Thyroid gland (tissue), 4 donors: ENCODE measurements at regions of chrX and their contacts with region 1.

Region 1: DNA sequence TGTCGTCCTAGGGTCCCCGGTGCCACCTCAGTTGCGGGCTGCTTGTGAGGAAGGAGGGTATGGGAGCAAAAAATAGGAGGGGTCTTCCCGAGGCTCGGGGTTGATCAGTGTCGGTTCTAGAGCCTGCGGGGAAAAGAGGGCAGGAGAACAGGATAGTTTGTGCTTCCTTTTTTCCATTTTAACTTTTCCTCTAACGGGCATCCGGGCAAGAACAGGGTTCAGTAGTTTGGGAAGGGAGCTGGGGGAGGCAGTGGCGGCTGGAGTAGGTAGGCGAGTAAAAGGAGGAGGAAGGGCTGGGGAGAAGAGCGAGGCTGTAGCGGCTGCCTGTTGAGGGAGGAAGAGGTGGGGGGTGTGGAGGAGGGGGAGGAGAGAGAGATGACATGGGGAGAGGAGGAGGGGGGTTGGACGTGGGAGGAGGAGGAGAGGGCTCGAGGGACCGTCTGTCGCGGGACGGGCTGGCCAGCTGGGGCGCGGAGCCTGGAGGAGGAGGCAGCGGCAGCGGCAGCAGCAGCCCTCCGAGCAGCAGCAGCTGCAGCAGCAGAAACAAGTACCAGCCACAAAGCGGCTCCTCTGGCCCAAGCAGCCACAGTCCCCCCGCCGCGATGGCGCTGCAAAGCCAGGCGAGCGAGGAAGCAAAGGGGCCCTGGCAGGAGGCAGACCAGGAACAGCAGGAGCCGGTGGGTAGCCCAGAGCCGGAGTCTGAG is at the start of gene SLC16A2:
- DNase-seq: peak; percentile 80 to 86
- H3K4me3 ChIP-seq: peak within 1 kb of the TSS; percentile 10 to 37 (median 15)
- H3K27ac ChIP-seq: peak within 1 kb of the TSS; percentile 76 to 93 (median 82)
- H3K4me1 ChIP-seq: peaks cover 0 to 10% of the 10 kb centered on the region in 2 donors
- H3K27me3 ChIP-seq: no peaks in the 10 kb centered on the region
- CTCF ChIP-seq: no peak
- POLR2A ChIP-seq: peak in 1 of 2 donors; percentile 54
- total RNA-seq, gene SLC16A2: 10.1 to 24.0 (median 20.1) TPM

Region 2: DNA sequence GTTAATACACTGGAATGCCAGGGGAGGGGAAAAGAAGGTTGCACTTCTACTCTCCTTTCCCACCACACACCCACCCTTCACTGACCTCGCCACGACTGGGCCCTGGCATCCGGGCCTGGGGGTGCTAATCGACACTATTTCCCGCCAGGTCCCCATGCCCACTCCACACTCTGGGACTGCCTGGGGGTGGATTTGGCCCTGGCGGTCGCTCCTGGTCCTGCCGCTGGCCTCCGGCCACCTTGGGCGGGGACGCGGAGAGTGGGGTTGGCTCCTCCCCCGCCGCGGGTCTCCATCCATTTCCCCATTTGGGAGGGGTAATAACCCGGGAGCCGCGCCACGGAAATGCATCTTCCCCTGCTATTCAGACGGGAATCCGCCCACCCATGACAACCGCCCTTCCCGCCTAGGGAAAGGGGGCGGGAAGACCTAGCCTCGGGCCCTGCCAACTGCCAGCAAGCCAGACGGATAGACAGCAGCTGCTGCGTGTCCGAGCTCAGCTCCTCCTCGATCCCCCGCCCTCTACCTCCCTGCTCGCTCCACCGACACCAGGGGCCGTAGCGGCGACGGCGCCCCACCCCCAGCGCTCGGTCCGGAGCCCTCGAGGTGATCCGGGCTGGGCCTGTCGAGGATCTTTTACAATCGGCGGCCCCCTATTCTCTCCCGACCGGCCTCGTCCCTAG is 115.1 kb after region 1 on chrX:
- intact Hi-C with region 1: loop called (anchors 10 kb)
- DNase-seq: peak; percentile 86
- H3K4me3 ChIP-seq: peak overlapping the region in 2 of 3 donors; percentile 32 to 37
- H3K27ac ChIP-seq: peak overlapping the region; percentile 77 to 92 (median 88)
- H3K4me1 ChIP-seq: peaks cover 0 to 4% of the 10 kb centered on the region in 2 donors
- H3K27me3 ChIP-seq: no peaks in the 10 kb centered on the region
- CTCF ChIP-seq: peak; percentile 12 to 51 (median 44)
- POLR2A ChIP-seq: peak in 1 of 2 donors; percentile 56

Region 3: DNA sequence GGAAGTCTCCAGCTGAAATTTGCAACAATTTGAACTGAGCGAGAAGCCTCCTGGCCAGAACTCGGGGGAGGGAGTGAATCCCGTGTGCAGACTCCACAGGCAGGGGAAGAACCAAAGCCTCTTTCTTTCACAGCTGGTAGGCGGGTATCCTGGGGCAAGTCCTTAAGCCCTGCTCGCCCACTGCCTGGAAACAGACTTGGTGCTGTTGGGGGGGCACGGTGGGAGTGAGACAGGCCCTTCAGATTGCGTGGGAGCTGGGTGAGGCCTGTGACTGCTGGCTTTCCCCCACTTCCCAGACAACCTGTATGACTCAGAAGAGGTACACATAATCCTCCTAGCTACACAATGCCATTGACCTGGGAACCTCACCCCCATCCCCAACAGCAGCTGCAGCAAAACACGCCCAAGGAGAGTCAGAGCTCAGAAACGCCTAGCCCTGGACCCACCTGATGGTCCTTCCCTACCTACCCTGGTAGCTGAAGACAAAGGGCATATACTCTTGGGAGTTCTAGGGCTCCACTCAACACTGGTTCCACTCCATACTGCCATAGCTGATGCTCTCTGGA is 215.6 kb after region 1 on chrX:
- intact Hi-C with region 1: no loop called
- DNase-seq: no peak
- H3K4me3 ChIP-seq: no peak overlapping the region
- H3K27ac ChIP-seq: no peak overlapping the region
- H3K4me1 ChIP-seq: no peaks in the 10 kb centered on the region
- H3K27me3 ChIP-seq: no peaks in the 10 kb centered on the region
- CTCF ChIP-seq: no peak
- POLR2A ChIP-seq: no peak